ENCODE measurements at regions of chr7 and their contacts with region 1.

Region 1: GRCh38 chr7:123724817-123725253 is 24.0 kb downstream of the WASL start:
- DNase-seq: no peak
- ATAC-seq: no peak
- H3K4me3 Mint-ChIP-seq: no peak overlapping the region
- H3K27ac Mint-ChIP-seq: no peak overlapping the region
- H3K4me1 Mint-ChIP-seq: peaks cover 41% of the 10 kb centered on the region
- H3K27me3 Mint-ChIP-seq: no peaks in the 10 kb centered on the region
- CTCF ChIP-seq: no peak

Region 2: GRCh38 chr7:123741940-123742339 is 17.1 kb after region 1 on chr7:
- CTCF ChIA-PET with region 1: no interaction called
- POLR2A ChIA-PET with region 1: no interaction called
- intact Hi-C with region 1: loop called (anchors 2 kb)
- DNase-seq: no peak
- ATAC-seq: no peak
- H3K4me3 Mint-ChIP-seq: no peak overlapping the region
- H3K27ac Mint-ChIP-seq: no peak overlapping the region
- H3K4me1 Mint-ChIP-seq: peaks cover 49% of the 10 kb centered on the region
- H3K27me3 Mint-ChIP-seq: no peaks in the 10 kb centered on the region
- CTCF ChIP-seq: no peak

Region 3: GRCh38 chr7:123757095-123757494 is 32.3 kb after region 1 on chr7:
- CTCF ChIA-PET with region 1: no interaction called
- POLR2A ChIA-PET with region 1: no interaction called
- intact Hi-C with region 1: no loop called
- DNase-seq: no peak
- ATAC-seq: no peak
- H3K4me3 Mint-ChIP-seq: no peak overlapping the region
- H3K27ac Mint-ChIP-seq: no peak overlapping the region
- H3K4me1 Mint-ChIP-seq: peaks cover 3% of the 10 kb centered on the region
- H3K27me3 Mint-ChIP-seq: no peaks in the 10 kb centered on the region
- CTCF ChIP-seq: no peak

Region 4: DNA sequence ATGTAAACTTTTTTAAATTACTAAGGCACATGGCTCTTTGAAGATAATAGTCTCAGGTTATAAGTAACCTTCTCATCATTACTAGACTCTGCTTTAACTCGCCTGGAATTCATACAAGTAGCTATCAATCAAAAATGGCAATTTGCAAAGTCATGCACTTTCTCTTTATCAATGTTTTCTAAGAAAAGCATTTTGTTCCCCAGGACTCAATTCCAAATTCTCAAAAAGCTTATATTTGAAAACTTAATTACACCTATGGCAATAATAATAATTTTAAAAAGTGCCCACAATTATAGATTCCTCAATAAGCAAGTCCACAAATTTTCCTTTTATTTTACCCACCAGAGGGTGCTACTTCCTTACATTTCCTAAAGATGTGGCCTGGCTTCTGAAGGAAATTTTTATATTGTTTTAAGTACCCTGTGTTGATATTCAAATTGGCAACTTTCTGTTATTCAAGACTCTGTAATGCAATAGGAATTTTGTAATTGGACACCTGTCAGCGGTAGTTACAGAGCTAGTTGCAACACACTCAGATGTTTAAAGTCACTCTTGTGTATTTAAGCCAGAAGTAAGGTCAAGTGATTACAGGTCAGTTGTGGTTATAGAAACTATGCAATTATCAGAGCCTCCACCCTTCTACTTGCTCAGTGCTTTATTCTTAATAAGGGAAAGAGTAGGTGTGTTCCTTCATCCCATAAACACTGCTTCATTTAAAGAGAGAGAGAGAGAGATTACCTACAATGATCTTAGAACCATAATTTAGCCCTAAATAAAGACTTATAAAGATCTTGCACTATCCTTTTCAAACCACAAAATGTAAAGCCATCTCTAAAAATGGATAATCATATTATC is 73.1 kb after region 1 on chr7:
- CTCF ChIA-PET with region 1: no interaction called
- POLR2A ChIA-PET with region 1: no interaction called
- intact Hi-C with region 1: no loop called
- DNase-seq: no peak
- ATAC-seq: no peak
- H3K4me3 Mint-ChIP-seq: no peak overlapping the region
- H3K27ac Mint-ChIP-seq: no peak overlapping the region
- H3K4me1 Mint-ChIP-seq: no peaks in the 10 kb centered on the region
- H3K27me3 Mint-ChIP-seq: no peaks in the 10 kb centered on the region
- CTCF ChIP-seq: no peak